ENCODE measurements at regions of chr12 and their contacts with region 1.

Region 1: GRCh38 chr12:66232263-66232662 is 43.2 kb downstream of the IRAK3 start:
- DNase-seq: no peak
- H3K4me3 ChIP-seq: no peak overlapping the region
- H3K27ac ChIP-seq: no peak overlapping the region
- H3K4me1 ChIP-seq: no peaks in the 10 kb centered on the region
- H3K27me3 ChIP-seq: no peaks in the 10 kb centered on the region
- CTCF ChIP-seq: no peak
- POLR2A ChIP-seq: no peak

Region 2: GRCh38 chr12:65853489-65854370 is 378.5 kb before region 1 on chr12:
- intact Hi-C with region 1: no loop called
- DNase-seq: no peak
- H3K4me3 ChIP-seq: no peak overlapping the region
- H3K27ac ChIP-seq: no peak overlapping the region
- H3K4me1 ChIP-seq: no peaks in the 10 kb centered on the region
- H3K27me3 ChIP-seq: no peaks in the 10 kb centered on the region
- CTCF ChIP-seq: no peak
- POLR2A ChIP-seq: no peak

Region 3: GRCh38 chr12:66144791-66145754 is 87.2 kb before region 1 on chr12:
- intact Hi-C with region 1: loop called (anchors 5 kb)
- DNase-seq: peak; percentile 26 to 52
- H3K4me3 ChIP-seq: no peak overlapping the region
- H3K27ac ChIP-seq: peak overlapping the region; percentile 27 to 43
- H3K4me1 ChIP-seq: no peaks in the 10 kb centered on the region
- H3K27me3 ChIP-seq: no peaks in the 10 kb centered on the region
- CTCF ChIP-seq: peak; percentile 28 to 65 (median 54)
- POLR2A ChIP-seq: no peak

Region 4: GRCh38 chr12:66365718-66366490 is 133.6 kb after region 1 on chr12:
- intact Hi-C with region 1: no loop called
- DNase-seq: no peak
- H3K4me3 ChIP-seq: no peak overlapping the region
- H3K27ac ChIP-seq: no peak overlapping the region
- H3K4me1 ChIP-seq: no peaks in the 10 kb centered on the region
- H3K27me3 ChIP-seq: no peaks in the 10 kb centered on the region
- CTCF ChIP-seq: no peak
- POLR2A ChIP-seq: no peak

Measured in uterus (tissue), 4 donors.